ENCODE measurements at regions of chrX and their contacts with region 1.

Region 1: DNA sequence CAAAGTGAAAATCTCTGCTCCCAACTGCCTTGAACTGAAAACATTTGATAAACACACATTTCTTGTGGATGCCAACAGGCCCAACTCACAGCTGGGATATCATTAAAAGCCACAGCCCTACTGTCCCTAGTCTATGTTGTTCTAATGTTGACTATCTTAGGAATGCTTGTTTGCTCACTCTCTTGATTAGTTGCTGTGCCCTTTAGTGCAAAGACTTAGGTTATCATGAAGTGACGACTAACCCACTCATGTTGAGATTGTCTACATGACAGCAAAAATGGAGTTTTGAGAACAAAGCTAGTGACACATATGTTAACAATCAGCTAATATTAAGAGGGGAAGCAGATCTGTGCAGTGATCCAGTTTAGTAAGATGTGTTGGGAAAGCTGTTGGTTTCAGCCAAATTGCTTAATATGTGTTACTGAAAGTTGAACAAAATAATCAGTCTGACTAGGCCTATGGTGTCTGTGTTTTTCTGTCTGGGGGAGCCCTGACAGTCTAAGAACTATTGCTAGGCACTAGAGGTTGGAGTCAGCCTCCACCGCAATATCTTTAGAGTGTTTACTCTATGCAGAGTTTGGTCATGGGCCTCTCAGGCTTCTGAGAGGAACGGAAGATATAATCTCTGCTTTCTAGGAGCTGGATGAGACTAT is 125.5 kb downstream of the ATG4A start:
- DNase-seq: no peak
- H3K4me3 ChIP-seq: no peak overlapping the region
- H3K27ac ChIP-seq: peak overlapping the region; percentile 50
- H3K4me1 ChIP-seq: no peaks in the 10 kb centered on the region
- H3K27me3 ChIP-seq: no peaks in the 10 kb centered on the region
- CTCF ChIP-seq: no peak

Region 2: DNA sequence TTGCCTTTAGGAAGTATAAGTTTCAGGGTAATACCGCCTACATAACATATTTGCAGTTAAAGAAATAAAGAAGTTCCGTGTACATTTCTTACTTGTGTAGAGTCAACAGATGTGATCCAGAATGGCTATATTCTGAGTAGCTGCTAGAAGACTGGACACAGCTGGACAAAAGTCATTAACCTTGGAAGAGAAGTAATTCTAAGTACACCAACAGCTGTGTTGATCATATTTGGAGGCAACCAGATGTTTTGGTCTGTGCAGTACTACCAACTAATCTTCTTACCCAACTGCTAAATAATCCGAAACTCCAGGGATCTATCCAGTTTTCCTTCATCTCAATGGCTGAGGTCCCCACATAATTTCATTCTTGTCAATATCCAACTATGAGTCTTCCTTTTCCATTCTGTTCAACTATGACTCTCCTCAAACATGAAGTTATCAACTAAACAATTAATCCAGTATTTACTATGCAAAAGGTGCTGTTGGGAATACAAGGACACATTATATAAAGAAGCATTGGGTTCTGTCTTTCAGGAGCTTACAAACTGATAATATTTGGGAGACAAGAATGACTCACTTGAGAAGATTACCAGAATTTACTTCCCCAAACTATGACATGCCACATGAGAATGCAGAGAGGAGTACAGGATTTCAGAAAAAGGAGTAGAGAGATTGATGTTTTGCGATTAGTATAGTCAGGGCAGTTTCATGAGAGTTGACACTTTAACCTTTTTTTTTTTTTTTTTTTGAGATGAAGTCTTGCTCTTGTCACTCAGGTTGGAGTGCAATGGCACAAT is 143.0 kb after region 1 on chrX:
- intact Hi-C with region 1: no loop called
- DNase-seq: no peak
- H3K4me3 ChIP-seq: no peak overlapping the region
- H3K27ac ChIP-seq: no peak overlapping the region
- H3K4me1 ChIP-seq: no peaks in the 10 kb centered on the region
- H3K27me3 ChIP-seq: no peaks in the 10 kb centered on the region
- CTCF ChIP-seq: no peak

Region 3: DNA sequence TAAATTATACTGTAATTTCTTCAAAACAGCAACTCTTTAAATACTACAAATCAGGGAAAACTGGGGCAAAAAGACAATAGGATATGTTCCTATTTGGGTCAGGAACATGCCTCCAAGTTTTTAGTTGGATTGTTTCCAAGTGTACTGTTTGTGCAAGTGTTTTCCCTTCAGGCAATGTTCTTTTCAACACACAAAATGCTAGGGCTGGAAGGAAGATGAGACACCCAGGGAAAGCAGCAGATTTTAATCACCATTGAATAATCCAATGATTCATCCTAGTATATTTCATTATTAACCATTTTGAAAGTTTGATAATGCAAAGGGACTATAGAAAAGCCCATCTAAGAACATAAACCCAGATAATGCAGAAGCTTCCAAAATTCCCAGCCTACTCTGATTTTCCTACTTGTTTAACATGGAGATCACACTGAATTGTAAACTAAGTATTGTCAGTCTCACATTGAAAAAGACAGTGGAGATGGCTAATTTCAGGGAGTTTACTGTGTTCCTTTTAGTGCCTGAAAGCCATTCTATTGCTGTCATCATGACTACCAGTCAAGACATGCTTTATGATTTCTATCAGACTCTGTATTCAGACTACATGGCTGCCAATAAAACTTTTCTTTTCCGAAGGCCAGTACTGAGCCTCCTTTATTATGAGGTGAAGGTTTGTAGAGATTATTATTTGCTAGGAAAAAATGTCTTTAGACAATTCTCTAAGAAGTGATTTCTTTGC is 182.6 kb after region 1 on chrX:
- intact Hi-C with region 1: no loop called
- DNase-seq: no peak
- H3K4me3 ChIP-seq: no peak overlapping the region
- H3K27ac ChIP-seq: no peak overlapping the region
- H3K4me1 ChIP-seq: no peaks in the 10 kb centered on the region
- H3K27me3 ChIP-seq: no peaks in the 10 kb centered on the region
- CTCF ChIP-seq: no peak

Region 4: DNA sequence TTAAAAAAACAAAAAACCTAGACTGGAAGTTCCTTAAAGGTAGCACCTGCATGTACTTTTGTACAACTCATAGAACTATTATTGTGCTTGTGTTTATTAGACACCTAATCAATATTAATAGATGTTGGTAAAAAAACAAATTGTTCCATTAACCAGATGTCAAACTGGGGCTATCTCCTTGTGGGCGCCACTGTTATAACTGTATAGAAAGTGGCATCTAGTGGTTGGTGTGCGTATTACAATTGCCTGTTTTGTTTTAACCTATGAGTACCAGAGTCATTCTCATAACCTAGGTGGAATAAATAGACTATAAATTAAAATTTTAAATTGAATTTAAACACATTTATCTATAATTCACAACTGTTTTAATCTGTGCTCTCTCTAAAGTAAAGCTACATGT is 320.0 kb after region 1 on chrX:
- intact Hi-C with region 1: loop called (anchors 10 kb)
- DNase-seq: no peak
- H3K4me3 ChIP-seq: no peak overlapping the region
- H3K27ac ChIP-seq: no peak overlapping the region
- H3K4me1 ChIP-seq: no peaks in the 10 kb centered on the region
- H3K27me3 ChIP-seq: no peaks in the 10 kb centered on the region
- CTCF ChIP-seq: peak; percentile 63

Measured in left ventricle myocardium inferior (tissue), 1 donor.